H1 (cell line): ENCODE measurements at regions of chr11 and their contacts with region 1.

Region 1: DNA sequence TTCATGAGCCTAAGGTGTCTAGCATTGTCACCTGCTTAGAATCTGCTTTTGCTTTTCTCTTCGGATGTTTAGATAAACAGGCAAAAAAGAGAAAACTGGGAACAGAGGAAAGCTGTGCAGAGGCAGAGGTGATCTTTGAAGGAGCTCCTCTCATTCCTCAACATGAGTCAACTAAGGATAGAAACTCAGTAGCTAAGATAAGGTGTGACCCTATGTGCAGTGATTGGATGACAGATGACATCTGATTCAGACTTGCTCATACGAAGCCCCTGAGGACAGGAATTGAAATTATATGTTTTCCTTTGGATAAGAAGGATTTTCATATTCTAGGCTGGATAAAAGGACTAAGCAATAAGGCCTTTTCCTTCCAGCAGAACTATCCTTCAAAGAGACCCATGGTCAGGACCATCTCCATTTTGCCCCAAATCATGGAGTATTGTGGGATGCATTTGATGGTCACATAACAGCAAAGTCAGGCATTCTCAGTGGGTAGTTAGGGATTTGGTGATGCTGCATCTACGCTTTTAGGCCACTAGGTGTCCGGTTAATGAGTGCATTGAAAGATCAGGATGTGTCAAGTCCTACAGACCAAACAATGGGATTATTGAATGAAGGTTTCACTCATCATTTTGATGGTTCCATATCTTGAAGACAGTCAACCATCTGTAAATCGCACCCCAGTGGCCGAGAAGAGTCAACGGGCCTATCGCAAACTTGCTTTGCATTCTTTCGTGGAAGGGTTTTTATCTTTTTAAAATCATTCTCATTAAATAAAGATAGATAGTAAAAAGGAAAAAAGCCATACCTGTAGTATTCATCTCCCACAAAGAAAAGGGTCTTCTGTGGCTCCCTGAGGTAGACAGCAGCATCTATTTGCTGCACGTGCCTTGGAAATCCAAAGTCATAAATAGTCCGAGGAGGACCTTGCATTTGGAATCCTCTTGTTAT is 32.2 kb downstream of the MMP20 start:
- DNase-seq: no peak
- H3K4me3 ChIP-seq: no peak overlapping the region
- H3K27ac ChIP-seq: no peak overlapping the region
- H3K4me1 ChIP-seq: no peaks in the 10 kb centered on the region
- H3K27me3 ChIP-seq: no peaks in the 10 kb centered on the region
- CTCF ChIP-seq: peak in 2 of 3 experiments; percentile 47 to 77; a peak in 2 of 4 replicates
- EP300 ChIP-seq: no peak
- POLR2A ChIP-seq: no peak
- RAD21 ChIP-seq: peak; percentile 33 to 44; a peak in 3 of 4 replicates

Region 2: DNA sequence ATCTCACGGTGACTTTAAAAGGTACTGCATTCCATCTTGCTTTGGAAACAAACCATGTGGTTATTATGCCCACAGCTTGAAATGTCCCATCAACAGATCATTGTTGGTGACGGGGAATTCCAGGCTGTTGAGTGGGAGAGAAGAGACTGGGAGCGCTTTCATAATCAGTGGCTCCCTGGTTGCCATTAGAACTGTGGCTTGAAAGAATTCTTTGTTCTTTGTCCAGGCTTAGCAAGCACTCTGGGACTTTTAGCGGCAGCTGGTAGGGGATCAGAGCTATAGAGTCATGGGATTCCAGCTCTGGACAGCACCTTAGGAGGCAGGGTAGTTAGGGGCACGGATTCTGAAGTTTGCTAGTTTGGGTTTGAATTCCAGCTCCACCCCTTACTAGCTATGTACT is 10.2 kb after region 1 on chr11:
- CTCF ChIA-PET with region 1: interaction called, 28 read pairs
- POLR2A ChIA-PET with region 1: no interaction called
- DNase-seq: no peak
- H3K4me3 ChIP-seq: no peak overlapping the region
- H3K27ac ChIP-seq: no peak overlapping the region
- H3K4me1 ChIP-seq: peaks cover 0 to 6% (median 1%) of the 10 kb centered on the region in 4 experiments; a peak in 2 of 7 replicates
- H3K27me3 ChIP-seq: no peaks in the 10 kb centered on the region
- CTCF ChIP-seq: no peak
- EP300 ChIP-seq: no peak
- POLR2A ChIP-seq: no peak
- RAD21 ChIP-seq: no peak